ENCODE measurements at regions of chr10 and their contacts with region 1.

Region 1: GRCh38 chr10:90787393-90788198 is 70.2 kb downstream of the HTR7 start:
- DNase-seq: peak; percentile 50
- ATAC-seq: peak; percentile 89
- H3K4me3 Mint-ChIP-seq: no peak overlapping the region
- H3K27ac Mint-ChIP-seq: no peak overlapping the region
- H3K4me1 Mint-ChIP-seq: peaks cover 53% of the 10 kb centered on the region
- H3K27me3 Mint-ChIP-seq: no peaks in the 10 kb centered on the region
- CTCF ChIP-seq: no peak

Region 2: DNA sequence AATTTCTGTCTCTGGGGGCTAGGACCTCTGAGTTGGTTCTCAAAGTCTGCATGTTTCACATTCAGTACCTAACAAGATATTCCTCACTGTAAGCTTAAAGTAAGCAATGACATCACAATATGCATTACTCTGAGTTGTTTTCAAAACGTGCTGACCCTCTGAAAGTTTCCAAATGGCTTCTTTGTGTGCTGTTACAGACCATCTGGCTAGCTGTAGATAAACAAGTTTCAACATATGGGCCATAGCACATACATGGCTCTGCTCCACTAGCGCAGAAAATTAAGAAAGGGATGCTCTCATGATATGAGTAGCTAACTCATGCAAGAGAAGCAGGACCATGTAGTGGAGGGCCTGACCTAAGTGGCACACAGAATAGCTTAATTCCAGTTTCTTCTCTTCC is 48.7 kb before region 1 on chr10:
- CTCF ChIA-PET with region 1: no interaction called
- POLR2A ChIA-PET with region 1: no interaction called
- DNase-seq: no peak
- ATAC-seq: no peak
- H3K4me3 Mint-ChIP-seq: no peak overlapping the region
- H3K27ac Mint-ChIP-seq: no peak overlapping the region
- H3K4me1 Mint-ChIP-seq: peaks cover 14% of the 10 kb centered on the region
- H3K27me3 Mint-ChIP-seq: no peaks in the 10 kb centered on the region
- CTCF ChIP-seq: no peak

Region 3: GRCh38 chr10:90805211-90805610 is 17.6 kb after region 1 on chr10:
- CTCF ChIA-PET with region 1: interaction called, 21 read pairs
- POLR2A ChIA-PET with region 1: no interaction called
- DNase-seq: no peak
- ATAC-seq: peak; percentile 92
- H3K4me3 Mint-ChIP-seq: peak overlapping the region; percentile 15; the same call in 1 of the 2 replicates
- H3K27ac Mint-ChIP-seq: peak overlapping the region; percentile 82
- H3K4me1 Mint-ChIP-seq: peaks cover 52% of the 10 kb centered on the region
- H3K27me3 Mint-ChIP-seq: peaks cover 80% of the 10 kb centered on the region
- CTCF ChIP-seq: no peak

Region 4: DNA sequence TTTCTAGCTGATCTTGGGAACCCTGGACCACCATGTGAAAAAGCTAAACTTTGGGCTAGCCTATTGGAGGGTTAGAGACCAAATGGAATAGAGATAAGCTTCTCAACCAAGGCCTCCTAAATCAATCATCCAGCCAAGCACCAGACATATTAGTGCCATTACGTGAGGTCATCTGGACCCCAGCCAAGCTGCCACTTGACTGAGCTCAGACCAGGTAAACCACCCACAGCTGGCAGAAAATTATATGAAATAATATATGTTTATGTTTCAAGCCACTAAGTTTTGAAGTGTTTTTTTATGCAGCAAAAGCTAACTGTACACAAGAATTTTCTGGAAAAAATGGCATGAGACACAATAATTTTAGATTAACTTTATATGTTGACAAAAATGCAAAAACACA is 350.2 kb after region 1 on chr10:
- CTCF ChIA-PET with region 1: no interaction called
- POLR2A ChIA-PET with region 1: no interaction called
- DNase-seq: no peak
- ATAC-seq: no peak
- H3K4me3 Mint-ChIP-seq: no peak overlapping the region
- H3K27ac Mint-ChIP-seq: no peak overlapping the region
- H3K4me1 Mint-ChIP-seq: peaks cover 6% of the 10 kb centered on the region
- H3K27me3 Mint-ChIP-seq: no peaks in the 10 kb centered on the region; the same call in 1 of the 2 replicates
- CTCF ChIP-seq: no peak

Measured in WTC11 (cell line).